Dendritic cell treated with granulocyte-macrophage colony-stimulating factor and Interleukin-4, amounts not matched to agents 40 ng/mL and 50 ng/mL, for 4 days (primary cell): ENCODE measurements at regions of chr11 and their contacts with region 1.

Region 1: GRCh38 chr11:130076778-130077481 is 7.2 kb downstream of the APLP2 start:
- H3K4me3 Mint-ChIP-seq: no peak overlapping the region
- H3K27ac Mint-ChIP-seq: peak overlapping the region; percentile 61
- H3K4me1 Mint-ChIP-seq: peaks cover 49% of the 10 kb centered on the region
- H3K27me3 Mint-ChIP-seq: no peaks in the 10 kb centered on the region

Region 2: DNA sequence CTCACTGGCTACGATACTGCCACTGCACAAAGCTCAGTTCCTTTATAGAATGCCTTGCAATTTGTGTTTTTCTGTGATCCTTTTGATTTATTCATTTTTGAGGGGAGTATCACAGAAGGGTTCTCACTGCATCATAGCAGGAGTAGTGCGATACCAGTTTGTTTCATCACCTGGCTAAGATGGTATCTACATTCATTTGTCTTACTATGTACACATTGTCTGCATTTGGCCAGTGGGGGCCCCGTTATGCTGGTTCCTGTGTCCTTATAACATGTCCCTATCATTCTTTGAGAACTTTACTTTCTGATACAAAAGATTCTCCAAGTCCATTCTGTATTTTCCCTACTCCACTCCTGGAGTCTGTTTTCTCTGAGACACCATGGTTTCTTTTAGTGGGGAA is 37.4 kb after region 1 on chr11:
- intact Hi-C with region 1: loop called (anchors 5 kb)
- H3K4me3 Mint-ChIP-seq: no peak overlapping the region
- H3K27ac Mint-ChIP-seq: no peak overlapping the region
- H3K4me1 Mint-ChIP-seq: peaks cover 35% of the 10 kb centered on the region
- H3K27me3 Mint-ChIP-seq: no peaks in the 10 kb centered on the region

Region 3: DNA sequence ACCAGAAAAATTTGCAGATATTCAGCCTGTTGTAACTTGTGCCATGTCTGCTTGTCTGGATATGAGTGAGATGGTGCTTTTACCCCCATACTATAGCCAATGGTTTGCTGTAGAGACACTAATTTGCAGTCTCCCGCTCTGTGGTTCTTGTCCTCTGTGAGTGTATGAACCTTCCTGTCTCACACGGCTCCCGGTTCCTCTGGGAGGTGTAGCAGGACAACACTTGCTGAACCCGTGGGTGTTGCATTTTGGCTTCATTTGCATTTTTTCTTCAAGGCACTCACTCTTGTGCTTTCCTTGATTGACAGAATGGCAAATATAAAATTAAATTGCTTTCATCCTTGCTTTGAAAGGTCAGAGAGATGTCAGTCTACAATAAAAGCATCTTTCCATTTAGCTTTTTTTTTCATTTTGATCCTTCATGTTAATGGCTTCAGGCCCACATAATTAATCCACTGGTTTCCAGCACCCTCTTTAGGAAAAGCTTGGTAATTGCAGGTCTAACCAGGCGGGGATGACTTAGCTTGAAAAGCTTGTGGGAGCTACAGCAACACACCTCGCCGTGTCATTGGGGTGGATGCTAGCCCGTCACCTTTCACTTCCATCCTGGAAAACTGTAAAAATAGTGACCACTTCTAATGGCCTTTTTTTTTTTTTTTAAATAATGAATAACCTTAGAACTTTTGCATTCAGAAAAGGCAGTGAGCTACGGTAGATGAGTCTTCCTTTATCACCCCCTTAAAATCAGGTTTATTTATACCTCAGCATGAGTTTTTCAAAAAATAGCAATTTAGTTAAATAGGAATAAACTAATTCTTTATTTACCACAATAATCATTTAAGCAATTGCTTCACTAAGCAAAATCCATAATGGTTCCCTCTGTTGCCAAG is 55.3 kb after region 1 on chr11:
- intact Hi-C with region 1: no loop called
- H3K4me3 Mint-ChIP-seq: no peak overlapping the region
- H3K27ac Mint-ChIP-seq: no peak overlapping the region
- H3K4me1 Mint-ChIP-seq: peaks cover 16% of the 10 kb centered on the region
- H3K27me3 Mint-ChIP-seq: no peaks in the 10 kb centered on the region